ENCODE measurements at regions of chr1 and their contacts with region 1.

Region 1: GRCh38 chr1:89987170-89987819 is 7.6 kb upstream of the ZNF326 start:
- DNase-seq: no peak
- ATAC-seq: peak; percentile 87

Region 2: GRCh38 chr1:89524369-89525168 is 462.7 kb before region 1 on chr1 and contains the start of gene LRRC8B:
- intact Hi-C with region 1: loop called (anchors 5 kb)
- DNase-seq: peak; percentile 96
- ATAC-seq: peak; percentile 100
- total RNA-seq, gene LRRC8B: 2.5 TPM

Region 3: DNA sequence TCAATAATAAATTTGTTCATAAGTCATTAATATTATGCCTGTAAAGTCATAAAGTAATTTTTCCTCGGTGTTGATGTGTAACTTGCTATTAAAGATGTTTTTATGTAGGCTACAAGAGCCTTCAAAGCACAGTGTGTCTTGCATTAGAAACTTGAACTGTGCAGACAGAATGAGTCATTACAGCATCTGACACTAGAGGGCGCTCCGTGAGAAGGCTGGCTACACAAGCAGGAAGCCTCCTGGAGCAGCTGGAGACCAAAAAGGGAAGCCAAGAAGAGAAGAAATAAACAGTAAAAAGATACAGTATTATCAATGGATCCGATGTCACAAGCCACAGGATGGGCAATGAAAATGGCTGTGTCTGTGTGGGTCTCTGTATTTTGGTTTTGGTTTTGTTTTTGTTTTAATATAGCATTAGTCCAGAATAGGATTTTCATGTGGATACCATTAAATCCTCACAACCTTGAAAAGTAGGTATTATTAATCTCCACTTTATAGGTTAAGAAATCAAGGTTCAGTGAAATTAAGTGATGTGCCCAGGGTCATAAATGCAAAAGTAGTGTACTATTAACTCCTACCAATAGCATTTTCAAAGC is 182.6 kb before region 1 on chr1:
- intact Hi-C with region 1: loop called (anchors 2 kb)
- DNase-seq: peak; percentile 71
- ATAC-seq: peak; percentile 91